Activated CD4-positive, alpha-beta memory T cell treated with anti-CD3 and anti-CD28 coated beads for 36 hours (primary cell): ENCODE measurements at regions of chr19 and their contacts with region 1.

Region 1: DNA sequence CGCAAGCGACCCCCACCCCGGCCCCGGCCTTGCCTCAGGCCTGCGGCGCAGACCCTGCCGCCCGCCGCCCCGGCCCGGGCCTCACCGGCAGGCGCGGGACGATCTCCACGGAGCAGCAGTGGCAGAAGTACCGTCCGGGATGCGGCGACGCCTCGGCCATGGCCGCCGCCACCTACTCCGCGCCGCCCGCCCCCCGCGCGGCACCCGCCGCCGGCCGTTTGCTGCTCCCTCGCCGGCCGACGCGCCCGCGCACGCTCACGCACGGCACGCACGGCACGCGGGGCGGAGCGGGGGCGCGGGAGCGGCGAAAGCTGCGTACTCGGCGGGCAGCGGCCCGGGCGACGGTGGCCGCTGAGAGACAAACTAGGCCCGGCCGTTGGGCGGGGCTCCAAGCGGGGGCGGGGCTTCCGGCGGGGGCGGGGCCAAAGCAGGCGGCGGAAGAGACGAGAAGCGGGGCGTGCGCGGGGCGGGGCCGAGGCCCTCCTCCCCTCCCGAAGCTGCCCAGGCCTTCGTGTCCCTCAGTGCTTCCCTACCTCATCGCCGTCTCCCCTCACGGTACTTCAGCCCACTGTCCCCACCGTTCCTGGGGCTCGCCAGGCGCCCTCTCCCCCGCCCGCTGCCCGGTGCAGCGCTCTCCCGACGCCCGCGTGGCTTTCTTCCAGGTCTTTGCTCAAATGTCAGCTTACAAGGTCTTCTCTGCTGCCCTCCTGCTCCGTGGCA is at the start of gene RNF126:
- DNase-seq: peak; percentile 97
- H3K4me3 Mint-ChIP-seq: peak within 1 kb of the TSS; percentile 93
- H3K27ac Mint-ChIP-seq: peak within 1 kb of the TSS; percentile 95
- H3K4me1 Mint-ChIP-seq: peaks cover 40% of the 10 kb centered on the region
- H3K27me3 Mint-ChIP-seq: no peaks in the 10 kb centered on the region
- total RNA-seq, gene RNF126: 84.4 to 89.7 TPM

Region 2: GRCh38 chr19:506404-507285 is 156.5 kb before region 1 on chr19:
- CTCF ChIA-PET with region 1: no interaction called
- POLR2A ChIA-PET with region 1: no interaction called
- intact Hi-C with region 1: loop called (anchors 5 kb)
- DNase-seq: peak; percentile 95
- H3K4me3 Mint-ChIP-seq: peak overlapping the region; percentile 89
- H3K27ac Mint-ChIP-seq: peak overlapping the region; percentile 100
- H3K4me1 Mint-ChIP-seq: peaks cover 40% of the 10 kb centered on the region
- H3K27me3 Mint-ChIP-seq: no peaks in the 10 kb centered on the region

Region 3: DNA sequence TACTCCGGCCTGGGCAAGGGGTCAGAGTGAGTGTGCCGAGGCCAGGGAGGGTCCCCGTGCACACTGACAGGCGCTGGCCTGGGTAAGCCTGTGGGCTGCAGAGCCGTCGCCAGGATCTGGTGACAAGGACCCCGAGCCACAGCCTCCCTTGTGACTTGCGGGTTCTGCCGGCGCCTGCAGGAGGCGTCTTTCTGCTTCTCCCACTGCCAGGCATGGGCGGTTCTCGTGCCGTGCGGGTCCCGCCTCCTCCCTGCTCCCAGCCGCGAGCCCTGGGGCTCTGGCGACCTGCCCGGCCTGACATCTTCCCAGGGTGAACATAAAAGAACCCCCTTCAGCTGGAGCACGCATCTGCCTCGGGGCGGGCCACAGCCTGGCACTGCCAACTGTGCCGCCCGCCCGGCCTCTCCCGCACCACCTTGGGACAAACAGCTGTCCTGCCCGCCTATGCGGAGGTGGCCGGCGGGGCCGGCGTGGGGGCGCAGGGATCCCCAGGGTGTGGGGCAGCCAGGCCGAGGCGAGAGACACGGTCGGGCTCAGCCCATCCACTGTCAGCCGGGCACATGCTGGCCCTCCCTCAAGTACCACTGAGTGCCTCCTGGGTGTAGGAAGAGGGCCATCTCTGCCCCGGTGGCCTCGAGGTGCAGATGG is 74.9 kb before region 1 on chr19:
- CTCF ChIA-PET with region 1: interaction called, 11 read pairs
- POLR2A ChIA-PET with region 1: no interaction called
- intact Hi-C with region 1: loop called (anchors 2 kb)
- DNase-seq: peak; percentile 83
- H3K4me3 Mint-ChIP-seq: peak overlapping the region; percentile 21
- H3K27ac Mint-ChIP-seq: no peak overlapping the region
- H3K4me1 Mint-ChIP-seq: peaks cover 4% of the 10 kb centered on the region
- H3K27me3 Mint-ChIP-seq: peaks cover 10% of the 10 kb centered on the region

Region 4: DNA sequence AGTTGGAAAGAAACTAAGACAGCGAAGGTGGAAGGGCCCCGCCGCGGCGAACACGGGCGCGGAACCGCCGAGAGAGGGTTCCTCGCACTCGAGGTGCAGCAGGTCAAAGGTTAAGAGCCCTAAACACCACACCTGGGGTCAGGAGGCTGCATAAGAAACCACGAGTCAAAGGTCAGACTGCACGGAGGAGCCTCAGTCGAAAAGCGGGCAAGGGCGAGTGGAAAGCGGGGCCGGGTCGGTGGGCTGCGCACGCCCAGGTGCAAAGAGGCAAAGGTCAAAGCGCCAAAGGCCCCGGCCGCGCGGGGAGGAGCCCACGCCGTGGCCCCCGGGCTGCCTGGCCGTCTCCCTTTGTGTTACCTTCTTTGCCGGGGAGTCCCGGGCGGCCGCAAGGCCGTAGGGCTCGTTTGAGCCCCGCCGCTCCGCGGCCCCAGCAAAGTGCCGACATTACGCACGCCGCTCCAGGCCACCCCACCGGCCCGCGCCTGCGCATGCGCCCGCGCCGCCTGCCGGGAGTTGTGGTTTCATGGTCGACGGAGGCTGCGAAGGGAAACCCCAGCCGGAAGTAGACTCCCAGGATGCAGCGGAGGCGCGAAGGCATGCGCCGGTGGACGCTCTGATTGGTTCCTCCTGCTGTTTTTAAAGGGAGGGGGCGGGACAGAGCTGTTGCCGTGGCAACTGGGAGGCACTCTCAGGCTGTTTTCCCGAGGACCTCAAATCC is 29.9 kb before region 1 on chr19 and contains the start of gene POLRMT:
- CTCF ChIA-PET with region 1: interaction called, 3 read pairs
- POLR2A ChIA-PET with region 1: interaction called, 3 read pairs
- intact Hi-C with region 1: loop called (anchors 1 kb)
- DNase-seq: peak; percentile 99
- H3K4me3 Mint-ChIP-seq: peak within 1 kb of the TSS; percentile 96
- H3K27ac Mint-ChIP-seq: peak within 1 kb of the TSS; percentile 84
- H3K4me1 Mint-ChIP-seq: peaks cover 33% of the 10 kb centered on the region
- H3K27me3 Mint-ChIP-seq: no peaks in the 10 kb centered on the region
- total RNA-seq, gene POLRMT: 71.5 to 72.5 TPM

Region 5: GRCh38 chr19:732148-733069 is 69.3 kb after region 1 on chr19:
- CTCF ChIA-PET with region 1: interaction called, 19 read pairs
- POLR2A ChIA-PET with region 1: interaction called, 4 read pairs
- intact Hi-C with region 1: loop called (anchors 1 kb)
- DNase-seq: no peak
- H3K4me3 Mint-ChIP-seq: no peak overlapping the region
- H3K27ac Mint-ChIP-seq: no peak overlapping the region
- H3K4me1 Mint-ChIP-seq: peaks cover 4% of the 10 kb centered on the region
- H3K27me3 Mint-ChIP-seq: peaks cover 4% of the 10 kb centered on the region